ENCODE measurements at regions of chr18 and their contacts with region 1.

Region 1: DNA sequence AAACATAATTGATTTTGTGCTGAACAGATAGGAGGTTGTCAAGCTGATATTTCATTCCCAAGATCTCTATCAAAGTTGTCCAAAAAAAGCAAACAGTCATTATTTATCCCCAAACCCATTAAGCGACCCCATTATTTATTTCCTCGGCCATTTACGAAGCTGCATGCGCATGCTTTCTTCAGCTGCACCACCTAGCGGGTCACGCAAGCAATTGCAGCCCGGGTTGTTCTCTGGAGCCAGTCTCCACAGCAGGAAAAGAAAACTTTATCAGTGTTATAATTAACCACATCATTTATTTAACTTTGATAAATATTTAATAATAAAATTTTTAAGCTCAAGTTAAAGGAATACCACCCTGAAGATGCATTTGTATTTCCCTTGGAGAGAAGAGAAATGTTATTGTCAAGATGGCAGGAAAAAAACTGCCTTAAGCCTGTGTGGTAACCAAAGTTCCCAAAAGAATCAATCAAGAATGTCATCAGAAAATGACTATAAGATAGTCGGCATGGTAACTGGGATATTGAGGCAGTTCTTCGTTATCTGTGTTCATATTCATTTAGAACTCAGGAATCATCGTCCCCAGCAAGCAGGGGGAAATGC is 304.7 kb downstream of the FBXO15 start:
- DNase-seq: peak; percentile 80
- H3K4me3 Mint-ChIP-seq: no peak overlapping the region
- H3K27ac Mint-ChIP-seq: no peak overlapping the region
- H3K4me1 Mint-ChIP-seq: peaks cover 2% of the 10 kb centered on the region
- H3K27me3 Mint-ChIP-seq: no peaks in the 10 kb centered on the region

Region 2: GRCh38 chr18:72762515-72763122 is 1080.3 kb before region 1 on chr18:
- intact Hi-C with region 1: loop called (anchors 2 kb)
- DNase-seq: peak; percentile 65
- H3K4me3 Mint-ChIP-seq: no peak overlapping the region
- H3K27ac Mint-ChIP-seq: no peak overlapping the region
- H3K4me1 Mint-ChIP-seq: no peaks in the 10 kb centered on the region
- H3K27me3 Mint-ChIP-seq: no peaks in the 10 kb centered on the region

Region 3: GRCh38 chr18:73918816-73919215 is 75.9 kb after region 1 on chr18:
- intact Hi-C with region 1: no loop called
- DNase-seq: peak; percentile 41
- H3K4me3 Mint-ChIP-seq: no peak overlapping the region
- H3K27ac Mint-ChIP-seq: no peak overlapping the region
- H3K4me1 Mint-ChIP-seq: no peaks in the 10 kb centered on the region
- H3K27me3 Mint-ChIP-seq: no peaks in the 10 kb centered on the region